Breast epithelium (tissue), 4 donors: ENCODE measurements at regions of chr7 and their contacts with region 1.

Region 1: DNA sequence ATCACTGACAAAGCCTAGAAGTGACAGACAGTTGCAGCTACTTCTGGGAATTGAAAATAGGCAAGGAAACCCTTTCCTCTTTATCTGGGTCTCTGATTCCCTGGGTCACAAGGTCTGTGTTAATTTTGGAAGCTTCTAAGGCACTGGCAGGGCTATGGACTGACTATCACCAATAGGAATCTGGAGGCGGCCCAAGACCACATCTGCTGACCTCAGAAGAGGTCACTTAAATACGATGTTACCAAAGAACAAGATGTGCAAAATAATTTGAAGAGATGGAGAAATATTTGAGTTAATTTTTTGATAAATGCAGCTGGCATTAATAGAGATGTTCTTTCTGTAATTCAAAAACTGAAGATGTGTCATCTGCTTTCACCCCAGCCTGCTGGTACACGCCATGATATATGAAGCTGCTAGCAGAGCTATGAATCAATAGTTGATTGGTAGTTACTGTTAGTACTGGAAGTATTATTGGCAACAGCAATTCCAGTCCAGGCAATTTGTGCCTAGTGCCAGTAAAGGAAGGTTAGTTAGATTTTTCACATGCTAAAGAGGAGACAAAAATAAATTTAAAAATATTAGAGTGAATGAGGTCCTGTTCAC is 5.5 kb upstream of the STEAP4 start:
- DNase-seq: no peak
- H3K4me3 ChIP-seq: no peak overlapping the region
- H3K27ac ChIP-seq: peak overlapping the region; percentile 66 to 74
- H3K4me1 ChIP-seq: no peaks in the 10 kb centered on the region
- H3K27me3 ChIP-seq: no peaks in the 10 kb centered on the region
- CTCF ChIP-seq: no peak
- POLR2A ChIP-seq: no peak

Region 2: DNA sequence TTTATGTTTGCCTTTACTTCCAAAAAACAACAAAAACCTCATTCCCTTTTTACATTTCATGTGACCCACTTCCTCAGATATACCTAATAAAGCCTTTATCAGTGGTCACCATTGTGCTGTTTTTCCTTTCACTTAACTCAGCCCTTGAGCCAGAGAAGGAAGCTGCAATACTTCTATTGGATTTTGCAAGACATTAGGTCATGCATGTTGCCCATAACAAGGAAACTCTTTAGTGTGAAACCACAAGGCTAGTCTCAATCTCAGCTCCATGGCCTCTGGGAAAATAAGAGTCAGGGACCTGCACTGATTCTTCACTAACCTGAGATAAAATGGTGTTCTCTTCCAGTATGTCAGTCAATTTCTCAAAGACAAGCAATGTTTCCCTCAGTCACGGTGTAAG is 33.3 kb before region 1 on chr7:
- intact Hi-C with region 1: loop called (anchors 2 kb)
- DNase-seq: peak in 1 of 2 donors; percentile 25
- H3K4me3 ChIP-seq: no peak overlapping the region
- H3K27ac ChIP-seq: peak overlapping the region; percentile 22 to 68
- H3K4me1 ChIP-seq: no peaks in the 10 kb centered on the region
- H3K27me3 ChIP-seq: no peaks in the 10 kb centered on the region
- CTCF ChIP-seq: no peak
- POLR2A ChIP-seq: no peak

Region 3: DNA sequence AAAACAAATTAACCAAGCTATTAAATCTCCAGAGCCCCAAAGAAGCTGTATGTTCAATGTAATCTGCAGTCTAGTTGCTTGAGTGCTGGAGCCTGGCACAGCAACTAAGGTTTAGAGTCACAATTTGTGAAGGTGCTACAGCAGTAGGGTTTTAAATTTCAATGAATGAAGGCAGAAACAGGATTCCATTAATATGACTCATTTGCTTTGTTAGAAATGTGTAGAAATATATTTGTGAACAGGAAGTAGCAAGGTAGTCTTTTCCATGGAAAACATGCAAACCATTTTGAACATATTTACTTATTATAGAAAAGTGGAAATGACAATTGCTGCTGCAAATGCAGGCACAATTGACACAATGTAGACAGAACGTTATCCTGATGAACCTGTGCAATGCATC is 143.5 kb after region 1 on chr7:
- intact Hi-C with region 1: no loop called
- DNase-seq: no peak
- H3K4me3 ChIP-seq: no peak overlapping the region
- H3K27ac ChIP-seq: no peak overlapping the region
- H3K4me1 ChIP-seq: no peaks in the 10 kb centered on the region
- H3K27me3 ChIP-seq: no peaks in the 10 kb centered on the region
- CTCF ChIP-seq: no peak
- POLR2A ChIP-seq: no peak

Region 4: DNA sequence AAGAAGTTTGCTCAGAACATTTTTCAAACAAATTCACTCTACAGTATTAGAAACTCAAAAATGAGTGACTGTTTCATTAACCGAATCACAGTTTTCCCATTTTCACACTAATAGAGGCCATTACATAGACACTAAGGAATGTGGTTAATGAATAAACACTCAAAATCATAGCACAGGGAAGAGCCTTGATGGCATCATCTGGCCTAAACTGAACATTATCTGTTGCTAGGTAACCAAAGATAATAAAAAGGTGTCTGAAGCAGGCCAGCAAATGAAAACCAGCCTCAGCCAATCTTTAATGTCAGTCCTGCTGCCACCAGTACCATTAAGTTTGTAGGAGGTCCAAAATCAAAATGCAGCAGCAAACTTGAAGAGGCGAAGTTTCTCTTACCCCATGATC is 1349.7 kb after region 1 on chr7:
- intact Hi-C with region 1: no loop called
- DNase-seq: no peak
- H3K4me3 ChIP-seq: no peak overlapping the region
- H3K27ac ChIP-seq: no peak overlapping the region
- H3K4me1 ChIP-seq: no peaks in the 10 kb centered on the region
- H3K27me3 ChIP-seq: no peaks in the 10 kb centered on the region
- CTCF ChIP-seq: no peak
- POLR2A ChIP-seq: no peak